ENCODE measurements at regions of chr3 and their contacts with region 1.

Region 1: DNA sequence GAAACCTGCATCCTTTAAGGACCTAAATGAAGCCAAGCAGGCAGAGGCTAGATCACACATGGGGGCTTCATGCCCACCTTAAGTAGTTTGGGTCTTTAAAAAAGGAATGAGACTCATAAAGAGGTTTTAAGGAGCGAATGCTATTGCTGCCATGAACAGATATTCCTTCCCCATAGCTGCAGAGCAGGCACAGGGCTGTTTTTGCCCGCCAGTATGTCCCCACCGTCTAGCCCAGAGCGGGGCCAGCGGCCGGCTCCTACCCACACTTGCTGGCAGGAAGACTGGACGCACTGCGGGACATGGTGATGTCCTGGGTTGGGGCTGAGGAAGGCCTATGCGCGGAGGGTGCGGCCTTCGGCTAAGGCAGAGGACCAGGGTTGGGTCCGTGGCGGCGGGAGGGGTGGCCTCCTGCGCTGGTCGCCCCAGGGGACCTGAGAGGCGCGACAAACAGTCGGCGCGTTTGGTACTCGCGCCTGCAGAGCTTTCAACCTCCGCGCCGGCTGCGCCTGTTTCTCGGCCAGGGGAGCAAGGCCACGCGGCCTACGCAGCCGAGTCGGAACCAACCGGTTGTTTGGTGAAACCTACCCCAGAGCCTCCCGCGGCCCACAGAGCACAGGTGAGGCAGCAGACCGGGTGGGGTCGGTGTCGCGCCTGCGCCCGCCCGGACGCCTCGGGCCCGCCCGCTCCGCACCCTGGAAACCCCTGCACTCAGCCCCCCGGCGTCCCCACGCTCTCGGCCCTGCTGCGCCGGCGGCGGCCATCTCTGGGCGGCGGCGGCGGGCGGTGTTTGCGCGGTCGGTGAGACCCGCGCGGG is at the start of gene FAIM:
- DNase-seq: no peak
- H3K4me3 ChIP-seq: peak within 1 kb of the TSS; percentile 64 to 87
- H3K27ac ChIP-seq: peak within 1 kb of the TSS; percentile 91
- H3K4me1 ChIP-seq: peaks cover 9% of the 10 kb centered on the region
- H3K27me3 ChIP-seq: no peaks in the 10 kb centered on the region
- CTCF ChIP-seq: no peak
- POLR2A ChIP-seq: no peak
- total RNA-seq, gene FAIM: 13.3 TPM

Region 2: DNA sequence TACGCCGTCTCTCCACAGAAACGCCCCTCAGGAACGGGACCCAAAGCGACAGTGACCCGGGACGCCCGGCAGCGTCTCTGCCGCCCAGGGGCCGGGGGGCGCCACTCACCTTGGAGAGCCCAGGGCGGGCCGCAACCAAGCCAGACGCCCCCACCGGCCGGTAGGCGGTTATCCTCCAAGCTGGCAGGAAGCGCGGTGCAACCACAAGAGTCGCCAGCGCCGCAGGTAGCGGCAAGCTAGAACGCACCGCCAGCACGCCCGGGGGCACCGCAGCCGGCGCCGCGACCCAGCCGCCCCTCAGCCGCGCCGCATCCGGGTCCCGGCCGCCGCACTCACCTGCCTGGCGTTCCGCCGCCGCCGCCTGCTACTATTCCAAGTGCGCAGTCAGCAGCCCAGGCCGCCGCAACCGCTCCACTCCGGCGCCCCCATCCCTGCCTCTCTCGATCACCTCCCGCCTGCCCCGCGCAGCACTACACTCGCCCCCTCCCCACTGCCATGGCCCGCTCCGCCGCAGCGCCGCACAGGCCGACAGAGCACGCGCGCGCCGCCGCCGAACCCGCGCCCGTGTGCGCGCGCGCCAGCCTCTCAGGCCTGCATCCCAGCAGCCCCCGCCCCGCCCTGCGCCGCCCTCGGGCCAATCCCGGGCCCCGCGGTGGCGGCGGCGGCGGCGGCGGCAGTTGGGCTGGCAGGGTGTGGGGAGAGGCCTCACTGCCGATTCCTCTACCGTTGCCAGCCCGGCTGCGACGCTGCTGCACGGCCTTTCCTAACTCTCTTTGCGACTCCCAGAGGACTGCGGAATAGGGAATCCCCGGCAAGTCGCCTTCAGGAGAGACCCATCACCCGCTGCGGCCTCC is 226.1 kb after region 1 on chr3 and contains the start of gene PIK3CB:
- intact Hi-C with region 1: loop called (anchors 10 kb)
- DNase-seq: peak in 1 of 2 donors; percentile 88
- H3K4me3 ChIP-seq: peak within 1 kb of the TSS; percentile 76 to 83
- H3K27ac ChIP-seq: peak within 1 kb of the TSS; percentile 92
- H3K4me1 ChIP-seq: peaks cover 20% of the 10 kb centered on the region
- H3K27me3 ChIP-seq: no peaks in the 10 kb centered on the region
- CTCF ChIP-seq: peak in 1 of 3 experiments; percentile 10
- POLR2A ChIP-seq: peak in 1 of 2 donors; percentile 57
- total RNA-seq, gene PIK3CB: 31.9 TPM